ENCODE measurements at regions of chr10 and their contacts with region 1.

Region 1: DNA sequence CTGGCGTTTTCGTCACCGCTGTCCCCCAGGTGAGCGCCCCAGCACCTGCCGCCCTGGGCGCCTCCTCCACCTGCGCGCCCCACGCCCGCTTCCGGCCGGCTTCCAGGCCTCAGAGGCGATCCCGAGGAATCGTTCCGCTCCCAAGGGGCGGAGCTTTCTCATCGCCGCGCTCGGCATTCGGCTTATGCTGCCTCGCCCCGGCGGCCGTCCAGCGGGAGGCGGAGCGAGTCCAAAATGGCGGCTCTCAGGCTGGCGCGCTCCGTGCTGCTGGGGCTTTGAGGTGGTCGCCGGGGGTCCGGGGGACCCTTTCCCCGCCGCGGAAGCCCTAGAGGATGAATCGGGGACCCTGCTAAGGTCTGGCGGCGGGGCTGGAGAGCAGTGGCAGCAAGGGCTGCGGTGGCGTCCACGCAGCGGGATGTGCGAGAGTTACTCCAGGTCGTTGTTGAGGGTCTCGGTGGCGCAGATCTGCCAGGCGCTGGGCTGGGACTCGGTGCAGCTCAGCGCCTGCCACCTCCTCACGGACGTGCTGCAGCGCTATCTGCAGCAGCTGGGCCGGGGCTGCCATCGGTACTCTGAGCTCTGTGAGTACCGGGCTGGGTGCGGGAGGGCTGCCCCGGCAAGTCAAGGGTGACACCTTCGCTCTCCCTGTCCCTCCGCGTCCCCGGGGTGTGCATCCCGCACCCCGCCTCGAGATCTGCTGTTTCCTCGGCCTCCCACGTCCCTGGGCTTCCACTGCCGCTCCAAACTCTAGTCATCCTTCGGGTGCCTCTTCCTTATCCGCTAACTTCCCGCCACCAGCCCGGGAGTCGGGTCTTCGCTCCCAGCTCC is at the start of gene TAF3:
- DNase-seq: peak; percentile 87 to 94 (median 93)
- H3K4me3 ChIP-seq: peak within 1 kb of the TSS; percentile 71 to 99 (median 84)
- H3K27ac ChIP-seq: peak within 1 kb of the TSS in 4 of 5 donors; percentile 36 to 70 (median 49)
- H3K4me1 ChIP-seq: peaks cover 0 to 19% of the 10 kb centered on the region in 2 donors
- H3K27me3 ChIP-seq: no peaks in the 10 kb centered on the region
- CTCF ChIP-seq: no peak
- POLR2A ChIP-seq: no peak
- total RNA-seq, gene TAF3: 4.0 to 12.0 (median 8.8) TPM

Region 2: DNA sequence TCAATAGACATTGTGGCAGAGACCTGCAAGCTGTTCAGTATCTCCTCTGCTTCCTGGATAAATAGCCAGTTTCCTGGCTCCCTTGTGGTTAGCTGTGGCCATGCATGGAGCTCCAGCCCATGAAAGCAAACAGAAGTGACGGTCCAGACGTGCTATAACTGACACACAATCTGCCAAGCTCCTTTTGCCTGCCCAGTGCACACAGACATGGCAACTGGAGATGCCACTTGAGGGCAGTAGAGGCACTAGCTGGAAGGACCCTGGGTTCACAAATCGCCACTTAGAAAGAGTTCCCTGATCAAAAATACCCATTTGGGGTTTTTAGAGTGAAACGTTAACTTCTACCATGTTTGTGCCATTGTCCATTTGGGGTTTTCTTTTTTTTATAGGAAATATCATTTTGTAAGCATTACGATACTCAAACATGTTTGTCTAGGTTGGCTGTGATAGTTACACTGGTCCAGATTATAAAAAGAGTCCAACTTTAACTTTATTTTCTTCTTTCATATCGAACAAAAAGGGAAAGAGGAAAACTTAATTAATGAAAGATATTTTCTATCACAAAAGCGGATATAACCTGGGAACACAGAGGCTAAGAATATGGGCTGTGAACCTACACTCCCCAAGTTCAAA is 62.0 kb before region 1 on chr10:
- intact Hi-C with region 1: loop called in 1 of 2 experiments (anchors 10 kb)
- DNase-seq: peak; percentile 38 to 72 (median 56)
- H3K4me3 ChIP-seq: no peak overlapping the region
- H3K27ac ChIP-seq: no peak overlapping the region
- H3K4me1 ChIP-seq: no peaks in the 10 kb centered on the region
- H3K27me3 ChIP-seq: no peaks in the 10 kb centered on the region
- CTCF ChIP-seq: peak; percentile 43 to 67 (median 51)
- POLR2A ChIP-seq: no peak

Region 3: DNA sequence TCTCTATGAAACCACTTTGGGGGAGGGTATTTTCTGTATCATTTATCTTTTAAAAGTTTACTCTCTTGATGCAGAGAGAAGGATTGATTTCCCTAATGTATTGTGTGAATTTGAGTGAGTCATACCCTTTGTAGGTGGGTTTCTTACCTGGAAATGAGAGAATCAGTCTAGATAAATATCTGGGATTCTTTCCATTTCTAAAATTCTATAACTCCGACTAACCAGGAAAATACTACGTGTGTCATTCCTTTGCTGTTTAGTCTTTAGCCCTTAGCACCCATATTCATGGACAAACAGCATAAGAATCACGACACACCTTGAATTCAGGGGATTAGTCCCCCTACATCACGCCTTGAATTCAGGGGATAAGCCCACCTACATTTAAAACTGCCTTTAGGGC is 375.0 kb after region 1 on chr10:
- intact Hi-C with region 1: no loop called
- DNase-seq: no peak
- H3K4me3 ChIP-seq: no peak overlapping the region
- H3K27ac ChIP-seq: no peak overlapping the region
- H3K4me1 ChIP-seq: no peaks in the 10 kb centered on the region
- H3K27me3 ChIP-seq: no peaks in the 10 kb centered on the region
- CTCF ChIP-seq: no peak
- POLR2A ChIP-seq: no peak

Measured in adrenal gland (tissue), 19 donors.